CD4-positive, alpha-beta memory T cell (primary cell): ENCODE measurements at regions of chr11 and their contacts with region 1.

Region 1: DNA sequence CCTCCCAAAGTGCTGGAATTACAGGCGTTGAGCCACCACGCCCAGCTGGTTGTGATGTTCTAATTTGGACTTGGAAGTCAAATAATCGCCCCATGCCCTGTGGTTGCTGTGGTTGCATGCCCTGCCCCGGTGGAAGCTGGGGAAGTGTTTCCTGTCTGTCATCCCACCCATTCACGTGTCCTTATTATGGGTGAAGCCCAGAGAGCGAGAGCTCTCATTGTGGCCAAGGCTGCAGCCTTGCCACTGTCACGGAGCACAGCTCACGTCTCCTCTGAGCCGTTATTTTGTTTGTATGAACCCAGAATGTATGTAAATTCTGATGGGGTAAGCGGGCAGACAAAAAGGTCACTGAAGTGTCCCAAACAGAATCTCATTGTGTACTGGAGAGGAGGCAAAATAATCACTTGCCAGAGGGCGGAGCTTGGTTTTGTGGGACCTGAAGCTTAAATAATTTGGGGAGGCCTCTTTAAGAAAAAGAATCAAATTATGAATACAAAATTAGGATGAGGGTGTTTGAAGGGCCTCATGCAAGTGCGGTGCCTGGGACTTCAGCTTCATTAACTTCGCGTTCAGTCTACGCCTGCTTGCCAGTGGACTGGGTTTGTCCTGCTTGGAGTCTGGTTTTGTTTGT is 25.8 kb upstream of the TREH start:
- DNase-seq: peak; percentile 63 to 72 (median 70)
- H3K4me3 ChIP-seq: peak overlapping the region in 1 of 2 donors; percentile 29
- H3K4me3 Mint-ChIP-seq: peak overlapping the region; percentile 48 to 90 (median 74)
- H3K27ac ChIP-seq: peak overlapping the region; percentile 3
- H3K27ac Mint-ChIP-seq: peak overlapping the region; percentile 61 to 95 (median 89)
- H3K4me1 ChIP-seq: peaks cover 50% of the 10 kb centered on the region
- H3K4me1 Mint-ChIP-seq: peaks cover 27 to 48% (median 37%) of the 10 kb centered on the region in 4 donors
- H3K27me3 ChIP-seq: no peaks in the 10 kb centered on the region
- H3K27me3 Mint-ChIP-seq: no peaks in the 10 kb centered on the region

Region 2: GRCh38 chr11:118621071-118621783 is 84.0 kb before region 1 on chr11:
- CTCF ChIA-PET with region 1: no interaction called
- POLR2A ChIA-PET with region 1: no interaction called
- intact Hi-C with region 1: no loop called
- DNase-seq: no peak
- H3K4me3 ChIP-seq: no peak overlapping the region
- H3K4me3 Mint-ChIP-seq: peak overlapping the region; percentile 14 to 78 (median 68)
- H3K27ac ChIP-seq: no peak overlapping the region
- H3K27ac Mint-ChIP-seq: peak overlapping the region in 3 of 7 donors; percentile 32 to 73 (median 47)
- H3K4me1 ChIP-seq: peaks cover 13% of the 10 kb centered on the region
- H3K4me1 Mint-ChIP-seq: peaks cover 5 to 16% (median 6%) of the 10 kb centered on the region in 4 donors
- H3K27me3 ChIP-seq: peaks cover 6% of the 10 kb centered on the region
- H3K27me3 Mint-ChIP-seq: peaks cover 9 to 11% of the 10 kb centered on the region in 2 donors

Region 3: DNA sequence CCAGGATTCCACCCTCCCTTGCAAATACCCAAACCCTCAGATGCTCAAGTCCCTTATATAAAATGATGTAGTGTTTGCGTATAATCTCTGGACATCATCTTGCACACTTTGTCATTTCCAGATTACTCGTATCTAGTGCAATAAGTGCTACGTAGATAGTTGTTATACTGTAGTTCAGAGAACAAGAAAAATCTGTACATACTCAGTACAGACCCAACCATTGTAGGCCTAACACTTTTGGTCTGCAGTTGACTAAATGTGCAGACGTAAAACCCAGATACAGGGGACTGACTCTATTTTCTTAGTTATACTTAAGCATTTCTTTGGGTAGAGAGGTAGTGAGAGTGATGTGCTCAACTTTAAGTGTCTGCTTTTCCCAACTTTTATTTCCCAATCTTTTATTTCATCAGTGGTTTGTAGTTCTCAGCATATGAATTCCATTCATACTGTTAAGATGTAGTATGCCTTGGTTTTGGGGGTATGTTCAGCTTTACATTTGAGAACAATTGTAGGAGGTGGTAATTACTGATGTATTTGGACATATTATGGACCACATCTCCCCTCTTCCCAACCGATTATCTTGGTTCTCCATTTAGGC is 41.9 kb after region 1 on chr11:
- CTCF ChIA-PET with region 1: no interaction called
- POLR2A ChIA-PET with region 1: interaction called, 10 read pairs
- intact Hi-C with region 1: no loop called
- DNase-seq: no peak
- H3K4me3 ChIP-seq: no peak overlapping the region
- H3K4me3 Mint-ChIP-seq: no peak overlapping the region
- H3K27ac ChIP-seq: no peak overlapping the region
- H3K27ac Mint-ChIP-seq: peak overlapping the region in 4 of 7 donors; percentile 10 to 72 (median 42)
- H3K4me1 ChIP-seq: peaks cover 6% of the 10 kb centered on the region
- H3K4me1 Mint-ChIP-seq: peaks cover 7 to 10% (median 7%) of the 10 kb centered on the region in 4 donors
- H3K27me3 ChIP-seq: no peaks in the 10 kb centered on the region
- H3K27me3 Mint-ChIP-seq: no peaks in the 10 kb centered on the region